Lower leg skin (tissue), 4 donors: ENCODE measurements at regions of chr20 and their contacts with region 1.

Region 1: GRCh38 chr20:49724408-49725223 is 10.9 kb upstream of the B4GALT5 start:
- DNase-seq: peak in 1 of 2 donors; percentile 27
- H3K4me3 ChIP-seq: no peak overlapping the region
- CTCF ChIP-seq: no peak
- POLR2A ChIP-seq: no peak

Region 2: GRCh38 chr20:49785852-49786175 is 61.2 kb after region 1 on chr20:
- intact Hi-C with region 1: no loop called
- DNase-seq: no peak
- H3K4me3 ChIP-seq: no peak overlapping the region
- CTCF ChIP-seq: no peak
- POLR2A ChIP-seq: no peak

Region 3: DNA sequence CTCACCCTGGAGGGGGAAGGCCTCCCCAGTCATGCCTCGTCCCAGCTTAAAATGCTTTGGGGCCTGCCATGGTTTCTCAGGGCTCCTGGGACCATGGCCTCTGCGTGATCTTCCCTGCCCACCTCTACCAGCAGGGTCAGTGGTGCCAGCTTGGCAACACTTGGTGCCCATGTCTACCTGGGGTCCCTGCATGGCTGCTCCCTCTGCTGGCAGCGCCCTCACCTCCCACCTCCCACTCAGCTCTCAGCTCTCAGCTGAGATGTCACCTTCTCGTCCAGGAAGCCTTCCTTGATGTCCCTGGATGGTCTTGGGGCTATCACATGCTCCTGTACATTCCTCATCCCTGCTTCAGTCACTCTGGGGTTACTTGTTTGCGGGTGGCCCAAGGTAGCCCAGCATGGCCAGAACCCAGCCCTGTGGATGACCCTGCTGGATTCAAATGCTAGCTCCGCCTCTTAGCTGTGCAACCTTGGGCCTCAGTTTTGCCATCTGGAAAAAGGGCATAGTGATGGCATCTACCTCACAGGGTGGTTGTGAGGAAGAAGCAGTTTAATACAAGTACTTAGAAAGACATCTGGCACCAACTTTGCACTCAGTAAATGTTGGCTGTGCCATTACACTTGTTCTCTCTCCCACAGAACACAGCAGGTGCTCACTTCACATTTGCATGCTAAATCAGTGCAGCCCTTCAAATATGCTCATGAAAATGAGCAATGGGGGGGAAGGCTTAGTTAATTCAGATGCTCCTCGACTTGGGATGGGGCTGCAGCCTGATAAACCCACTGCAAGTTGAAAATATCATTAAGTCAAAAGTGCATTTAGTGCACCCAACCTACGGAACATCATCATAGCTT is 732.1 kb after region 1 on chr20:
- intact Hi-C with region 1: loop called (anchors 5 kb)
- DNase-seq: no peak
- H3K4me3 ChIP-seq: no peak overlapping the region
- CTCF ChIP-seq: no peak
- POLR2A ChIP-seq: no peak